ENCODE measurements at regions of chrX and their contacts with region 1.

Region 1: DNA sequence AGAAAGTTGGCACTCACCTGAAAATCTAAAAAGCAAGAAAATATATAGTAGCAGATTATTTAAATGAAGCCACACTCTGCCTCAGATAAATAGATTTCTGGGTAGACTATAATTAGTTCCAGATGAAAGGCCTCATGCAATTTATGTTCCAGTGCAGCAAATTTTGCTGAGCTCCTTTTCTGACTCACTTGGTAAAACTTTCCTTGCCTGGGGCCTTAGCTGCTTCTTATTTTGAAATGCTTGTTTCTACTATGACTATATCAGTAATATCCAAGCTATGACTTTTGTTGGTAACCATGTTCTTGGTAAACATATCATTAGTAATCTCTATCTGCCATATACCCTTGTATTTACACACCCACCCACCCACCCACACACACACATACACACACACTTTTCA is 961.8 kb downstream of the SH3BGRL start:
- DNase-seq: no peak
- ATAC-seq: no peak
- H3K4me3 ChIP-seq: no peak overlapping the region
- H3K27ac ChIP-seq: no peak overlapping the region
- H3K4me1 ChIP-seq: no peaks in the 10 kb centered on the region
- H3K27me3 ChIP-seq: no peaks in the 10 kb centered on the region
- CTCF ChIP-seq: no peak
- POLR2A ChIP-seq: no peak
- RAD21 ChIP-seq: no peak

Region 2: GRCh38 chrX:81996166-81996565 is 167.5 kb before region 1 on chrX:
- CTCF ChIA-PET with region 1: no interaction called
- POLR2A ChIA-PET with region 1: no interaction called
- dilution Hi-C with region 1: no loop called
- in situ Hi-C with region 1: no loop called
- intact Hi-C with region 1: no loop called
- DNase-seq: no peak
- ATAC-seq: no peak
- H3K4me3 ChIP-seq: no peak overlapping the region
- H3K27ac ChIP-seq: no peak overlapping the region
- H3K4me1 ChIP-seq: no peaks in the 10 kb centered on the region
- H3K27me3 ChIP-seq: no peaks in the 10 kb centered on the region
- CTCF ChIP-seq: no peak
- POLR2A ChIP-seq: no peak
- RAD21 ChIP-seq: no peak

Region 3: DNA sequence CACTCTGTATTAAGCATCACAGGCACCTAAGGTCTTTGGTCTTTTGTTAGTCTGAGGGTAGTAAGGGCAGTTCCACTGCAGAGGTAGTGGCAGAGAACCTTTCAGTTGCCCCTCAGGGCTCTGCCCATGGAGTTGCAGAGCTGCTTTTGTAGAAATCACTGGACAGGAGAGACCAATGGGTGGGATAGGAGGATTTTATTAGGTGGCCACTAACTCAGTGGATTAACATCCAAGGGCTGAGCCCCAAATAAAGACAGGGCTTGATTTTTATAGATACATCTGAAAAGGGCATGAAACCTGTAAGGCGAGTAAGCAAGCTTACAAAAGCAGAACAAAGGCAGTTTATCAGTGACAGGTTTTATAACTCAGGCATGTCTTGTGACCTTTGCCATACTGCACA is 73.6 kb after region 1 on chrX:
- CTCF ChIA-PET with region 1: no interaction called
- POLR2A ChIA-PET with region 1: no interaction called
- dilution Hi-C with region 1: no loop called
- in situ Hi-C with region 1: no loop called
- intact Hi-C with region 1: no loop called
- DNase-seq: no peak
- ATAC-seq: no peak
- H3K4me3 ChIP-seq: no peak overlapping the region
- H3K27ac ChIP-seq: no peak overlapping the region
- H3K4me1 ChIP-seq: no peaks in the 10 kb centered on the region
- H3K27me3 ChIP-seq: no peaks in the 10 kb centered on the region
- CTCF ChIP-seq: no peak
- POLR2A ChIP-seq: no peak
- RAD21 ChIP-seq: no peak

Region 4: GRCh38 chrX:83495898-83496297 is 1332.2 kb after region 1 on chrX:
- CTCF ChIA-PET with region 1: no interaction called
- POLR2A ChIA-PET with region 1: no interaction called
- dilution Hi-C with region 1: no loop called
- in situ Hi-C with region 1: no loop called
- intact Hi-C with region 1: loop called (anchors 10 kb)
- DNase-seq: no peak
- ATAC-seq: no peak
- H3K4me3 ChIP-seq: no peak overlapping the region
- H3K27ac ChIP-seq: no peak overlapping the region
- H3K4me1 ChIP-seq: no peaks in the 10 kb centered on the region
- H3K27me3 ChIP-seq: no peaks in the 10 kb centered on the region
- CTCF ChIP-seq: no peak
- POLR2A ChIP-seq: no peak
- RAD21 ChIP-seq: no peak